ENCODE measurements at regions of chr10 and their contacts with region 1.

Region 1: GRCh38 chr10:116287906-116288501 is 15.0 kb upstream of the GFRA1 start:
- DNase-seq: no peak
- H3K4me3 ChIP-seq: no peak overlapping the region
- H3K27ac ChIP-seq: no peak overlapping the region
- H3K4me1 ChIP-seq: no peaks in the 10 kb centered on the region
- H3K27me3 ChIP-seq: no peaks in the 10 kb centered on the region
- CTCF ChIP-seq: peak; percentile 40 to 75 (median 61)
- EP300 ChIP-seq: no peak
- POLR2A ChIP-seq: no peak

Region 2: DNA sequence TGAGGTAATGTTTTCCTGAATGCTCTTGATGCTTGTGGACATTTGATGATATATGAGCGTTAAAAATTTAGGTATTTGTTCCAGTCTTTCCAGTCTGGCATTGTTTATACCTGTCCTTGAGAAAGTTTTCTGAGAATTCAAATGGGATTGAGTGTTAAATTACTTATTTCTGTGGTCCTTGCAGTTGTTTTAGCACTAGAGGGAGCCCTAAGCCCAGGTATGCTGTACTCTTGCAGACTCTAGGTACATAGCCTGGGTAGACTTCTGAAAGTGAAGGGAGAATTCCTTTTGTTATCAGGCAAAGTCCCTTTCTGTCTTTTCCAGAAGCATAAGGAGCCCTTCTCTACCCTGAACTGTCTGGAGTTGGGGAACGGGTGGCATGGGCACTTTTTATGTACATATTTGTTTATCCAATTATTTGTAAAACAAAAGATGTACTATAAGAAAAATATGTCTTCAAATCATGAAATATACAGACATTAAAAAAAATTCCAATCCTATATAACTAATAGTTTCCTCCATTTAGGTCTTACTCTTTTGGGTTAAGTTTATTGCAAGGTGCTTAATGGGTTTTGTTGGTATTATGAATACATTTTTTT is 932.7 kb before region 1 on chr10:
- intact Hi-C with region 1: loop called (anchors 10 kb)
- DNase-seq: no peak
- H3K4me3 ChIP-seq: no peak overlapping the region
- H3K27ac ChIP-seq: no peak overlapping the region
- H3K4me1 ChIP-seq: no peaks in the 10 kb centered on the region
- H3K27me3 ChIP-seq: no peaks in the 10 kb centered on the region
- CTCF ChIP-seq: peak in 3 of 4 experiments; percentile 9 to 27 (median 22)
- EP300 ChIP-seq: no peak
- POLR2A ChIP-seq: no peak

Region 3: DNA sequence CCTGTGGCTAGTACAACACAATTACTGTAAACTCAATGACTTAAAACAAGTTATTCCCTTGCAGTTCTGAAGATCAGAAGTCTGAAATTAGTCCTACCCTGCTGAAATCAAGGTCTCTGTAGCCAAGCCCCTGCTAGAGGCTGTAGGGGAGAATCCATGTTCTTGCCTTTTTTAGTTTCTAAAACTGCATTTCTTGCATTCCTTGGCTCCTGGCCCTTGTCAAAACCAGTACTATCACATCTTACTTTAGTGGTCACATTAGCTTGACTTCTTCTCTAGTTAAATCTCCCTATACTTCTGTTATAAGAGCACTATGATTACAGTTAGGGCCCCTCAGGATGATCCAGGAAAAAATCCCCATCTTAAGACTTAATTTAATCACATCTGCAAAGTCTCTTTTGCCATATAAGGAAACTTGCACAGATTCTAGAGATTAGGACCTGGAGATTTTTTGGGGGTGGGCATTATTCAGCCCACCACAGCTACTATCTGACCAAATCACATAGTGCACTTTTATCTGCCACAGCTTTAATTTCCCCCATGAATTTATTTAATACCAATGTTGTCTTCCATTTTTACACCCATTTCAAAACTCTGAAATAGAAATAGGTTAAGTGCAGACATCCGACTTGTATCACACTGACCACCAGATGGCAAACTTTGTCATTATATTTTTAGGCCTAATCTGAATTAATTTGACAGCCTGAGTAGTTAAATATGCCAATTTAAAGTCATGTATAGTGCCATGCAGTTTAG is 581.8 kb before region 1 on chr10:
- intact Hi-C with region 1: loop called (anchors 5 kb)
- DNase-seq: no peak
- H3K4me3 ChIP-seq: no peak overlapping the region
- H3K27ac ChIP-seq: no peak overlapping the region
- H3K4me1 ChIP-seq: no peaks in the 10 kb centered on the region
- H3K27me3 ChIP-seq: no peaks in the 10 kb centered on the region
- CTCF ChIP-seq: no peak
- EP300 ChIP-seq: no peak
- POLR2A ChIP-seq: no peak

Region 4: GRCh38 chr10:115801992-115802391 is 486.0 kb before region 1 on chr10:
- intact Hi-C with region 1: loop called (anchors 1 kb)
- DNase-seq: no peak
- H3K4me3 ChIP-seq: no peak overlapping the region
- H3K27ac ChIP-seq: no peak overlapping the region
- H3K4me1 ChIP-seq: no peaks in the 10 kb centered on the region
- H3K27me3 ChIP-seq: no peaks in the 10 kb centered on the region
- CTCF ChIP-seq: no peak
- EP300 ChIP-seq: no peak
- POLR2A ChIP-seq: no peak

Region 5: DNA sequence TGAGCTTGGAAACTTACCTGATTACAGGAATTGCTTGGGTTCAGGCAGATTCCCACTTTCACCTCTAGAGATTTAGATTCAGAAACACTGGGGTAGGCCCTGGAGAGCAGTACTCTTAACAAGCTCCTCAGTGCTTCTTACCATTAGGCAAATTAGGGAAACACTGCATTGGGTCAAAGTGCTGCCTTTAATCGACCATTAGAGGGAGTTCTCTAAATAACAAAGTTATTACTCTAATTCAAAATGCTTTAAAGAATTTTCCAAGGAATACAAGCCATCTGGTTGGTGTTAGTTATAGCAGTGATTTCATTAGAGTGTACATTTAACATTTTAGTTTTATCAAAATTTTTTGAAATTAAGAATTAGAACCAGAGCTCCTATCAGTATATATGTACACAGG is 339.5 kb before region 1 on chr10:
- intact Hi-C with region 1: loop called (anchors 5 kb)
- DNase-seq: no peak
- H3K4me3 ChIP-seq: no peak overlapping the region
- H3K27ac ChIP-seq: no peak overlapping the region
- H3K4me1 ChIP-seq: peaks cover 0 to 14% (median 0%) of the 10 kb centered on the region in 4 donors
- H3K27me3 ChIP-seq: no peaks in the 10 kb centered on the region
- CTCF ChIP-seq: peak in 1 of 4 experiments; percentile 43
- EP300 ChIP-seq: no peak
- POLR2A ChIP-seq: no peak

Region 6: DNA sequence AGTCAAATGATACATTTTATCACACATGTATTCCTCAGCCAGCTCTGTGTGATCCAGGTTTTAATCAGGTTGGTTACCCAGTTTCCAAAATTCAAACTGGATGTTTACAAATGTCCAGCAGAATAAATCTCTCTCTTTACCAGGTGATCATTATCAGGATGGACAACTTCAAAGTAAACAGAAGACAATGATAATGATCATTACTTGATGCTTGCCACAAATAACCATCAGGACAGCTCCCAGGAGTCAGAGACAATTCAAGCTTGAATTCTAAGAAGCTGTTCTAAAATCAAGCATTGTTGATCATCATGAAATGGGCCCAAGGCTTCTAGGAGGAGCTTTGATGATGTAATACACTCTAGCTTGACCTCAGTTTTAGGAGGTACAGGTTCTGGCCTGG is 67.7 kb before region 1 on chr10:
- intact Hi-C with region 1: no loop called
- DNase-seq: no peak
- H3K4me3 ChIP-seq: no peak overlapping the region
- H3K27ac ChIP-seq: no peak overlapping the region
- H3K4me1 ChIP-seq: no peaks in the 10 kb centered on the region
- H3K27me3 ChIP-seq: no peaks in the 10 kb centered on the region
- CTCF ChIP-seq: no peak
- EP300 ChIP-seq: no peak
- POLR2A ChIP-seq: no peak

Measured in sigmoid colon (tissue), 7 donors.